MCF 10A (cell line): ENCODE measurements at regions of chr14 and their contacts with region 1.

Region 1: DNA sequence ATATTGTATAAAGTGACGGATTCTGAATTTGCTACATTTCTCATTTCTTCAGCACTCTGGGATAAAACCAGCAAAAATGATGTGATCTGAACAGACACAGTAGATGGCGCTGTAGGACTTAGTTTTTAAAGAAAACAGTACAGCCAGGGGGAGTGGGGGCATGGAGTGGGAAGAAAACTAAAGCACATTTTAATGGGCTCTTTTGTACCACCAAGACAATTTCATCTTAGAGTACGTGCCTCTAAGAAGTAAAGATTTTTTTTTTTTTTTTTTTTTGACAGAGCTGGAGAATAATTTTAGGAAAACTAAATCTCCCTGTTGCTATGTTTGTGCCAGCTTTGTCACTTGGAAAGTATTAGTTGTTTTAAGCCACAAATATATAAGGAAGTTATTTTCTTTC is 124.4 kb downstream of the RAD51B start:
- DNase-seq: peak; percentile 77
- H3K4me3 Mint-ChIP-seq: no peak overlapping the region
- H3K27ac Mint-ChIP-seq: peak overlapping the region; percentile 81
- H3K4me1 Mint-ChIP-seq: peaks cover 39% of the 10 kb centered on the region
- H3K27me3 Mint-ChIP-seq: no peaks in the 10 kb centered on the region
- CTCF ChIP-seq: peak; percentile 81

Region 2: GRCh38 chr14:67680121-67680602 is 263.8 kb before region 1 on chr14:
- CTCF ChIA-PET with region 1: no interaction called
- POLR2A ChIA-PET with region 1: no interaction called
- intact Hi-C with region 1: no loop called
- DNase-seq: no peak
- H3K4me3 Mint-ChIP-seq: no peak overlapping the region
- H3K27ac Mint-ChIP-seq: no peak overlapping the region
- H3K4me1 Mint-ChIP-seq: peaks cover 17% of the 10 kb centered on the region
- H3K27me3 Mint-ChIP-seq: no peaks in the 10 kb centered on the region
- CTCF ChIP-seq: no peak

Region 3: DNA sequence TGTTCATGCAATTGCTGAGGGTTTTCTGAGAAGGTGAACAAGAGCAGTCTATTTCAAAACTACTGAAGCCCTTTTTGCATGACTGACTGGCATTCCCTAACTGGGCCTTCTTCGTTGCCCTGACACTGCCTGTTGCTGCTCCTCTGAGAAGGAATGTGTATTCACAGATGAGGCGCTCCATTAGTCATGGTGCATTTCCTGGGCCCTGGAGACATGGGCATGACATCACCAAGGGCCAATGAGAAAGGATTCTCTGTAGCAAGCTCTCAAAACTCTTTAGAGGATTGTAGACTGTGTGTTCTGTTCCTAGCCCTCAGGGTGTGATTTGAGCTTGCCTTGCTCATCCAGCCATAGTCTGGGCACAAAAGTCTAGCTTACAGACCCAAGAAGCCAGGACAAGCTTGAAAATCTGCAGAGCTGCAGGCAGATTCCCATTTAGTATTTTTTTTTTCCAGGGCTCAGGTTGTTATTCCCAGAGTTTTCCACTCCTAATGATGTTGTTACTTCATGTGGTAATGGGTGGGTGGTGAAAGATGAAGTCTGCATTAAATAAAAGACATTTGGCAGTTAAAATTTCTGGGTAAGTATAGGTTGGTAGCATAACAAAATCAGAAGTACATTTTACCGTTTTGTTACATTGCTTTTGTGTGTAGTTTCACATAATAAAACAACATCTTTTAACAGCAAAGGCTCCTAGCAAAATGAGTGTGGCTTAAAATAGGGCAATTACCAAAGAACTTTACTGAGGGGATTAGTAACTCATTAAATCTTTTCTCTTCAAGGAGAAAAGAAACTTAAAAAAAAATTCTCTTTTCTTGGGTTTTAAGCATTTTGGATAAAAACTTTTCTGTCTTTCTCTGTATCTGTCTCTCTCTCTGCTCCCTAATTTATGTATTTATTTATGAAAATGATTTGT is 194.0 kb after region 1 on chr14:
- CTCF ChIA-PET with region 1: interaction called, 3 read pairs
- POLR2A ChIA-PET with region 1: interaction called, 10 read pairs
- intact Hi-C with region 1: loop called (anchors 2 kb)
- DNase-seq: peak; percentile 98
- H3K4me3 Mint-ChIP-seq: peak overlapping the region; percentile 16
- H3K27ac Mint-ChIP-seq: peak overlapping the region; percentile 94
- H3K4me1 Mint-ChIP-seq: peaks cover 50% of the 10 kb centered on the region
- H3K27me3 Mint-ChIP-seq: no peaks in the 10 kb centered on the region
- CTCF ChIP-seq: no peak

Region 4: GRCh38 chr14:68157971-68158371 is 214.0 kb after region 1 on chr14:
- CTCF ChIA-PET with region 1: no interaction called
- POLR2A ChIA-PET with region 1: interaction called, 3 read pairs
- intact Hi-C with region 1: loop called (anchors 1 kb)
- DNase-seq: peak; percentile 60
- H3K4me3 Mint-ChIP-seq: peak overlapping the region; percentile 30
- H3K27ac Mint-ChIP-seq: peak overlapping the region; percentile 96
- H3K4me1 Mint-ChIP-seq: peaks cover 18% of the 10 kb centered on the region
- H3K27me3 Mint-ChIP-seq: no peaks in the 10 kb centered on the region
- CTCF ChIP-seq: no peak

Region 5: GRCh38 chr14:68458840-68459469 is 515.0 kb after region 1 on chr14:
- CTCF ChIA-PET with region 1: no interaction called
- POLR2A ChIA-PET with region 1: no interaction called
- intact Hi-C with region 1: loop called (anchors 10 kb)
- DNase-seq: peak; percentile 94
- H3K4me3 Mint-ChIP-seq: peak overlapping the region; percentile 48
- H3K27ac Mint-ChIP-seq: peak overlapping the region; percentile 89
- H3K4me1 Mint-ChIP-seq: peaks cover 34% of the 10 kb centered on the region
- H3K27me3 Mint-ChIP-seq: no peaks in the 10 kb centered on the region
- CTCF ChIP-seq: no peak

Region 6: GRCh38 chr14:68816262-68816942 is 872.5 kb after region 1 on chr14:
- CTCF ChIA-PET with region 1: interaction called, 47 read pairs
- POLR2A ChIA-PET with region 1: interaction called, 14 read pairs
- intact Hi-C with region 1: loop called (anchors 2 kb)
- DNase-seq: peak; percentile 85
- H3K4me3 Mint-ChIP-seq: peak overlapping the region; percentile 49
- H3K27ac Mint-ChIP-seq: peak overlapping the region; percentile 88
- H3K4me1 Mint-ChIP-seq: peaks cover 20% of the 10 kb centered on the region
- H3K27me3 Mint-ChIP-seq: no peaks in the 10 kb centered on the region
- CTCF ChIP-seq: peak; percentile 98